ENCODE measurements at regions of chr17 and their contacts with region 1.

Region 1: DNA sequence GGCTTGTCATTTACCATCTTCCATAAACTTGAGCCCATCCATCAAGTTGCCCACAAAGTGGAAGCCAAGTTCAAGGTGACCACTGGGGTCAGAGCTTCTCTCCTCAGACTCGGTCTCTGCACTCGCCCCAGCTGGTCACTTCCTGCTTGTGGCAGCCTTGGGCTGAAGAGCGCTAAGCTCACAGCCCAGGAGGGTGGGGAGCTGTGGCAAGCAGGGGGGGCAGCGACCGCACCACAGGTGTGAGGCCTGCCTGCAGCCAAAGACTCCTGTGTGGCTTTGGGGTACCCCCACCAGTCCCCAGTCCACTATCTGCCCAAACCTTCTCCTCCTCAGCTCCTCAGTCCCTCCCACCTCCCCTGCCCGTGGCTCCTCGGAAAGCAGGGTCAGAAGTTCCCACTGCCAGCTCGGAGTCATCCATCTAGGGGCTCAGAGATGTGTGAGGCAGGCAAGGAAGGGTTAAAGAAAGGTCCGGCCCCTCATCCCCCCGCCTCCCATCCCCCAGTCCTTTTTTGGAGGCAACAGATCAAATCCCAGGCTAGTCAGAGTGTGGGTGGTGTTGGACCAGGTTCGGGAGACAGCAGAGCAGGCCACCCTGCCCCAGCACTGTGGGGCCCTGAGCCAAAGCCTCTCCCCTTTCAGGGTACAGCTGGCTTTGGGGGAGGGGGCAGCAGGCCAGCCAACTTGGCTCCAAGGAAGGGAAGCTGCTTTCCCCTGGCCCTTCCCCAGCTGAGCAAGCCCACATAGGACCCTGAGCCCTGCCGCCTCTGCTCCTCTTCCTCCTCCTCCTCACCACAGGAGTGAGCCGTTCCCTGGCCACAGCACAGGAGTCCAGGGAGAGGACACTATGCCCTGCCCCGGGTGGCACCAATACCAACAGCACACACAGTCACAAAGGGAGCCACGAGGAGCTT is 3.2 kb downstream of the CSF3 start:
- DNase-seq: no peak
- H3K4me3 ChIP-seq: no peak overlapping the region
- H3K27ac ChIP-seq: no peak overlapping the region
- H3K4me1 ChIP-seq: no peaks in the 10 kb centered on the region
- CTCF ChIP-seq: no peak

Region 2: GRCh38 chr17:40075201-40075941 is 56.9 kb after region 1 on chr17:
- CTCF ChIA-PET with region 1: no interaction called
- POLR2A ChIA-PET with region 1: no interaction called
- intact Hi-C with region 1: loop called (anchors 1 kb)
- DNase-seq: peak; percentile 69
- H3K4me3 ChIP-seq: no peak overlapping the region
- H3K27ac ChIP-seq: no peak overlapping the region
- H3K4me1 ChIP-seq: peaks cover 16% of the 10 kb centered on the region
- CTCF ChIP-seq: peak; percentile 95

Region 3: DNA sequence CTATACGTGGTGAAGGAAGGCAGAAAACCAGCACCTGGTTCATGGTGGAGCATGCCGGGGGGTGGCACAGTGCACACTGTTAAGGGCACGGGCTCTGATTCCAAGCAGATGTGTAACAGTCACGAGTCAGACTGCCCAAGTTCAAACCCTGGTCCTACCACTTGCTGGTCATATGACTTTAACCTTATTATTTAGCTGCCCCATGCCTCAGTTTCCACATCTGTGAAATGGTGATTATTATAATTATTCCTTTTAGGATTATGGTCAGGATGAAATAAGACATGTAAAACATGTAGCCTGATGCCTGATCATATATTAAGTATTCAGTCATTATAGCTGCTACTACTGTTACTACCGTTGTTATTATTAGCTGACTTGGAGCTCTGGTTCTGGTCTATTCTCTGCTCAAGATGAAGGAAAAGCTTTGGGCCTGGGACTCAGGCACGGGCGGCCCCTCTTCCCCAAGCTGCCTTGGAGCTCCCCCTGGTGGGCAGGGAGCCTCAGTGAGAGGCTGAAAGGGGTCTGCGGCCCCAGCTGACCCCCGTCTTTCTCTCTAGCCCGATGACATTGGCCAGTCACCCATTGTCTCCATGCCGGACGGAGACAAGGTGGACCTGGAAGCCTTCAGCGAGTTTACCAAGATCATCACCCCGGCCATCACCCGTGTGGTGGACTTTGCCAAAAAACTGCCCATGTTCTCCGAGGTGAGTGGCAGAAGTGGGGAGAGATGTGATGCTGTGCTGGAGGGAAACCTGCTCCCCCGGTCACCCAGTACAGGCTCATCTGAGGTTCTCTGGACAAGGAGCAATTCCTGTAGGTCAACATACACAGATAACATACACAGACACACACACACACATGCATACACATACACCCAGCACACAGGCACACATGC is 67.9 kb after region 1 on chr17:
- CTCF ChIA-PET with region 1: no interaction called
- POLR2A ChIA-PET with region 1: no interaction called
- intact Hi-C with region 1: loop called (anchors 1 kb)
- DNase-seq: peak; percentile 77
- H3K4me3 ChIP-seq: no peak overlapping the region
- H3K27ac ChIP-seq: no peak overlapping the region
- H3K4me1 ChIP-seq: no peaks in the 10 kb centered on the region
- CTCF ChIP-seq: peak; percentile 99

Region 4: DNA sequence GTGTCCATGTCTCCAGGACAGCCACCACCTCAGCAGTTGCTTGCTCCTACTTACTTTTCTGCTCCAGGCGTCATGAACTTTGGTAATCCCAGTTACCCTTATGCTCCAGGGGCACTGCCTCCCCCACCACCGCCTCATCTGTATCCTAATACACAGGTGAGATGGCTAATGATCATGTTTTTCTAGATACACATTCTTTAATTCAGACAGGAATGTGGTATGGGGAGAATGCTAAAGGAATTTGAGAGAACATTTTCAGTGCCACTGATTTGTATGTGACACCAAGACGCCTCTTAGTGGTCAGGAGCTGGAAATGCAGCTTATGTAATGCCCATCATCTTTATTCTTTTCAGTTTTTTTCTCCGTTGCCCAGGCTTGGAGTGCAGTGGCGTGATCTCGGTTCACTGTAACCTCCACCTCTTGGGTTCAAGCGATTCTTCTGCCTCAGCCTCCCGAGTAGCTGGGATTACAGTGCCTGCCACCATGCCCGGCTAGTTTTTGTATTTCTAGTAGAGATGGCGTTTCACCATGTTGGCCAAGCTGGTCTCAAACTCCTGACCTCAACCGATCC is 149.9 kb after region 1 on chr17:
- CTCF ChIA-PET with region 1: no interaction called
- POLR2A ChIA-PET with region 1: no interaction called
- intact Hi-C with region 1: loop called (anchors 1 kb)
- DNase-seq: peak; percentile 72
- H3K4me3 ChIP-seq: no peak overlapping the region
- H3K27ac ChIP-seq: no peak overlapping the region
- H3K4me1 ChIP-seq: no peaks in the 10 kb centered on the region
- CTCF ChIP-seq: peak; percentile 85

Region 5: GRCh38 chr17:40191237-40192208 is 173.1 kb after region 1 on chr17:
- CTCF ChIA-PET with region 1: no interaction called
- POLR2A ChIA-PET with region 1: no interaction called
- intact Hi-C with region 1: loop called (anchors 1 kb)
- DNase-seq: peak; percentile 84
- H3K4me3 ChIP-seq: peak overlapping the region; percentile 70
- H3K27ac ChIP-seq: no peak overlapping the region
- H3K4me1 ChIP-seq: peaks cover 31% of the 10 kb centered on the region
- CTCF ChIP-seq: peak; percentile 88

Measured in OCI-LY7 (cell line).